Left cardiac atrium (tissue), 4 donors: ENCODE measurements at regions of chr11 and their contacts with region 1.

Region 1: DNA sequence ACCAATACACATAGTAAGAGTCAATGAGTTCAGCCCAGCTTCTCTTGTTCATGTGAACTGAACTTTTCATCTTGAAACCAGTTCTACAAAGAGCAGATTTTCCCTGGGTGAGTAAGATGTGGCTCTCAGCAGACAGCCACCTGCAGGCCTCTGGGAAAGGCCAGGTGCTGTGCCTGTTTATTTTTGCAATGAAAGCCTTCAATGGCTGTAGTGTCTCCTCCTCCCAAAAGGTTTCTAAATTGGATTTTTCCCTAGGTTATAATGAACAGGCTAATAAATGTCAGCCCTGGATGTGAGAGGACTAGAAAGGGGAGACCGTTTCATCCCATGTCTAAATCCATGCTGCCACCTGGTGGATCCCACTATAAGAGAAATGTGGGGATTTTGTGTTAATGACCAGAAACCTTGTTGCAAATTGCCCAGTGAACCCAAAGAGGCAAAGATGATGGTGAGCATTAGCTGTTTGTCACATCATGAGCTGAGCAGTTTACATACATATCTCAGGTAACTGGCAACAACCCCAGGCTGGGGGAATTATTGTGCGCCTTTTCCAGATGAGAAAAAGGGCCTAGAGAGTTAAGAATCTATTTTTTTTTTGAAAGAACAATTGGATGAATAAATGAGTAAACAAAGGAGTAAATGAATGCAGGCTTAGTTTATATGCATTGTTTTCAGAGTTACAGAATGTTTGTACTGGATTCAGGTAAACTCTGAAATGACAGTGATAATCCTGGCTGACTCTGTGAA is 12.7 kb downstream of the C11orf91 start:
- DNase-seq: peak; percentile 36
- ATAC-seq: no peak

Region 2: GRCh38 chr11:33161120-33162005 is 526.5 kb before region 1 on chr11 and contains the start of gene CSTF3:
- intact Hi-C with region 1: loop called (anchors 5 to 10 kb)
- DNase-seq: peak; percentile 100
- ATAC-seq: peak; percentile 99 to 100
- total RNA-seq, gene CSTF3: 14.0 to 15.8 TPM

Region 3: GRCh38 chr11:33257897-33258630 is 429.8 kb before region 1 on chr11:
- intact Hi-C with region 1: loop called in 1 of 2 experiments (anchors 5 kb)
- DNase-seq: peak; percentile 91
- ATAC-seq: peak; percentile 87 to 92

Region 4: GRCh38 chr11:33515347-33515746 is 172.6 kb before region 1 on chr11:
- intact Hi-C with region 1: no loop called
- DNase-seq: no peak
- ATAC-seq: no peak

Region 5: DNA sequence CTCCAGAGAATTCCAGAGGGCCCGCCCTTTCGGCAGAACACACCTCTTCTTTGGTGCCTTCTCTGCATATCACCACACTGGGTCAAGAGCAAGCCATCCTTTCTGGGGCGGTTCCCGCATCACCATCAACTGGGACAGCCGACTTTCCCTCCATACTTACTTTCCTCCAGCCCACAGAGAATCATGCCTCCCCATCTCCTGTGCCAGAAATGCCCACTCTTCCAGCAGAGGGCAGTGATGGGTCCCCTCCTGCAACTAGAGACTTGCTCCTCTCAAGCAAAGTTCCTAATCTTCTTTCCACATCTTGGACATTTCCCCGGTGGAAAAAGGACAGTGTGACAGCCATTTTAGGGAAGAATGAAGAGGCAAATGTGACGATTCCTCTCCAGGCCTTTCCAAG is 145.0 kb before region 1 on chr11:
- intact Hi-C with region 1: loop called (anchors 5 kb)
- DNase-seq: peak; percentile 46
- ATAC-seq: peak in 1 of 2 donors; percentile 54